ENCODE measurements at regions of chr13 and their contacts with region 1.

Region 1: DNA sequence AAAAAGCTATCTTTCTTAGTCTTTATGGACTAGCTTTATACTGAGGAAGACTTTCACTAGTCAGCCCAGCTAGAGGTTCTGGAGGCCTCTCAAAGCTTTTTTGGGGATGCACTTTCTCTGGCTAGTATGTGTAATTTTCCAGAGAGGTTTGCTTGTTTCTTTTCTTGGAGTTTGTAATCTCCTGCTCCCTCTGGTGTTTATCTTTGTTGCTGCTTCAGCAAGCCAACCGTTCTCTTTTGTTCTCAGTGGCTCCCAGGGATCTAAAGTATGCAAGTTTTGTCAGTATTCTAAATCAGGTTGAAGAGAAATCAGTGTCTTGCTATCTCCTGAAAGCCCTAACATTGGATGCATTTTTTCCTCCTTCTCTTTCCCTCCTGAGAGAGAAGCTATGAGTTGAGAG is 121.1 kb upstream of the MYO16 start:
- DNase-seq: no peak
- H3K4me3 ChIP-seq: no peak overlapping the region
- H3K27ac ChIP-seq: no peak overlapping the region
- H3K4me1 ChIP-seq: no peaks in the 10 kb centered on the region
- H3K27me3 ChIP-seq: no peaks in the 10 kb centered on the region
- CTCF ChIP-seq: peak; percentile 66 to 81

Region 2: DNA sequence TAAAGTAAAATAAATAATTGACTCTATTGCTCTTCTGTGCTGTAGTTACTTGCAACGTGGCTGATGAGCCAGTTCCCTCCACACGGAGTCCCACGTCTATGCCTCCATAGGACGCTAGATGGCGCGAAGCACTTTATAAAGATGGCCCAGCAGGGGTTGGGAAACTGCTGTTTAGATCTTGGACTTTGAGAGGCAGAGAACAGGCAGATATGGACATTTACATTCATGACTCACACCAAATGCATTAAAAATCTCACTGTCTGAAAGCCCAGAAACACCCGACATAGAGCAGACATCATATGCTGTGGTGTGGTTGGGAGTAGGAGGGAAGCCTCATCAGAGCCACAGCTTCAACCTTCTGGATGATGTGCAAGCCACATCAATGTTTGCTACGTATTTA is 1297.2 kb before region 1 on chr13:
- CTCF ChIA-PET with region 1: no interaction called
- dilution Hi-C with region 1: no loop called
- in situ Hi-C with region 1: no loop called
- intact Hi-C with region 1: loop called (anchors 5 kb)
- DNase-seq: peak; percentile 59
- H3K4me3 ChIP-seq: no peak overlapping the region
- H3K27ac ChIP-seq: no peak overlapping the region
- H3K4me1 ChIP-seq: no peaks in the 10 kb centered on the region
- H3K27me3 ChIP-seq: no peaks in the 10 kb centered on the region
- CTCF ChIP-seq: peak; percentile 93 to 95

Region 3: GRCh38 chr13:108003607-108004006 is 504.7 kb before region 1 on chr13:
- CTCF ChIA-PET with region 1: interaction called, 11 read pairs
- dilution Hi-C with region 1: no loop called
- in situ Hi-C with region 1: no loop called
- intact Hi-C with region 1: no loop called
- DNase-seq: no peak
- H3K4me3 ChIP-seq: no peak overlapping the region
- H3K27ac ChIP-seq: no peak overlapping the region
- H3K4me1 ChIP-seq: no peaks in the 10 kb centered on the region
- H3K27me3 ChIP-seq: no peaks in the 10 kb centered on the region
- CTCF ChIP-seq: no peak

Region 4: GRCh38 chr13:108322206-108322824 is 185.9 kb before region 1 on chr13:
- CTCF ChIA-PET with region 1: no interaction called
- dilution Hi-C with region 1: no loop called
- in situ Hi-C with region 1: loop called in 1 of 2 experiments (anchors 10 kb)
- intact Hi-C with region 1: loop called (anchors 5 kb)
- DNase-seq: peak; percentile 26
- H3K4me3 ChIP-seq: no peak overlapping the region
- H3K27ac ChIP-seq: no peak overlapping the region
- H3K4me1 ChIP-seq: no peaks in the 10 kb centered on the region
- H3K27me3 ChIP-seq: no peaks in the 10 kb centered on the region
- CTCF ChIP-seq: peak; percentile 64 to 73

Region 5: DNA sequence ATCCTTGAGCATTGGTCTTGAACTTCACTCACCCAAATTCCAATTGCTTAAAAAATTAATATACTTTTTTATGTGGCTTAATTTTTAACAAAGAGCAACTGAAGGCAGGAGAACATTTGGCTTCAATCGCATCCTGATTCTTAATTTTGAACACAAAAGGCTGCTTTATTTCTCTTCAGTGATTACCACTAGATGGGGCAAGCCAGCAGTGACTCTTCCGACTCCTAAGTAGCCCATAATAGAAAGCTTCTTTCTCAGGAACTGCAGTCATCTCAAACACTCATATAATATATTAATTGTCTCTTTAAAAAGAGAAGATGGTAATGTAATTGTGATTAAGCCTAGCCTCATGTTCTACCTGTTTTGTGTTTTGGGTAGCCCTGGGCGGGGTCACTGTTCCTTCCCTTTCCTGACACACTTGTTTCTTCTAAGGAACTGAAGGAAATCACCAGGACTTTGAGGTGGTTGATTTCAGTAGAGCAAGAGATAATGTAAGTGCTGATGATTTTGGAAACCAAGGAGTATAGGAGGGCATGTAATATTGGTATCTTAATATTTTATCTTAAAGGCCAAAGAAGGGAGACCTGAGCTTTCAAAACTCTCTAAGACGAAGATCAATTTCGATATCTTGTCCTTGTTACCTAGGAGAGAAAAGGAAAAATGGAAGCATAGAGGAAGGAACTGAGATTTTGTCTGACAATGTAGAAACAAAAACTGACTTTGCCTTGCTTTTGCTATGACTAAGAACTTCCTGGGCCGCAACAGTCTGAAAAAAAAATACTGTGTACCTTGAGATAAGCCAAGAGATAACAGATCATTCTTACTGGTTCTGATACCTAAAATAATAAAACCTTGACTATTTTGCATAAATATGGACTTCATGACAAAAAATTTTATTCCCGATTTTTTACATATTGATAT is 165.6 kb before region 1 on chr13:
- CTCF ChIA-PET with region 1: no interaction called
- dilution Hi-C with region 1: no loop called
- in situ Hi-C with region 1: loop called in 1 of 2 experiments (anchors 5 kb)
- intact Hi-C with region 1: loop called (anchors 5 kb)
- DNase-seq: peak; percentile 6
- H3K4me3 ChIP-seq: no peak overlapping the region
- H3K27ac ChIP-seq: no peak overlapping the region
- H3K4me1 ChIP-seq: no peaks in the 10 kb centered on the region
- H3K27me3 ChIP-seq: peaks cover 2% of the 10 kb centered on the region
- CTCF ChIP-seq: peak; percentile 47 to 72

Region 6: GRCh38 chr13:108448891-108449290 is 59.4 kb before region 1 on chr13:
- CTCF ChIA-PET with region 1: no interaction called
- dilution Hi-C with region 1: no loop called
- in situ Hi-C with region 1: no loop called
- intact Hi-C with region 1: loop called (anchors 5 kb)
- DNase-seq: peak; percentile 24
- H3K4me3 ChIP-seq: no peak overlapping the region
- H3K27ac ChIP-seq: no peak overlapping the region
- H3K4me1 ChIP-seq: no peaks in the 10 kb centered on the region
- H3K27me3 ChIP-seq: no peaks in the 10 kb centered on the region
- CTCF ChIP-seq: no peak

Region 7: DNA sequence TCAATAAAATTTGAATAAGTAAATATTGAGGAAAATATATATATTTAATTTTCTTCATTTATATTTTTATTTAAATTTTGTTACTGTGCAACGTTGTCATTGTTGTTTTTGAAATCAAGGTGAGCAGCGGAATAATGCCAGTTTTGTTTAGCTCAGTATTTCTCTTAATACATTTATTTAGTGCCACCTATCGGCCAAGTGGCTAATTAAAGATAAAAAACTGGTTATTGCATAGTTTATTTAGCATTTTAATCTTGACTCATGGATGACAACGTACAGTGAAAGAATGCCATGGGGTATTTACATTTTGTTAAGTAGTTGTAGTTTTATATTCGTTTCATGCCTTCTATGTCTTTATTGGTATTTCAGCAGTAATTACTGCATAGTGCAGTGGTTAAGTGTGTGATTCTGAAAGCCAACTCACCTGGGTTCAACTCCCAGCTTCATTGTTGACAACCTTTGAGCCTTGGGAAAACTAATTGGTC is 387.0 kb after region 1 on chr13:
- CTCF ChIA-PET with region 1: no interaction called
- dilution Hi-C with region 1: no loop called
- in situ Hi-C with region 1: no loop called
- intact Hi-C with region 1: loop called (anchors 5 kb)
- DNase-seq: peak; percentile 65
- H3K4me3 ChIP-seq: no peak overlapping the region
- H3K27ac ChIP-seq: no peak overlapping the region
- H3K4me1 ChIP-seq: peaks cover 3% of the 10 kb centered on the region
- H3K27me3 ChIP-seq: no peaks in the 10 kb centered on the region
- CTCF ChIP-seq: peak; percentile 48 to 55

Measured in mammary epithelial cell (primary cell).